ENCODE measurements at regions of chr6 and their contacts with region 1.

Region 1: DNA sequence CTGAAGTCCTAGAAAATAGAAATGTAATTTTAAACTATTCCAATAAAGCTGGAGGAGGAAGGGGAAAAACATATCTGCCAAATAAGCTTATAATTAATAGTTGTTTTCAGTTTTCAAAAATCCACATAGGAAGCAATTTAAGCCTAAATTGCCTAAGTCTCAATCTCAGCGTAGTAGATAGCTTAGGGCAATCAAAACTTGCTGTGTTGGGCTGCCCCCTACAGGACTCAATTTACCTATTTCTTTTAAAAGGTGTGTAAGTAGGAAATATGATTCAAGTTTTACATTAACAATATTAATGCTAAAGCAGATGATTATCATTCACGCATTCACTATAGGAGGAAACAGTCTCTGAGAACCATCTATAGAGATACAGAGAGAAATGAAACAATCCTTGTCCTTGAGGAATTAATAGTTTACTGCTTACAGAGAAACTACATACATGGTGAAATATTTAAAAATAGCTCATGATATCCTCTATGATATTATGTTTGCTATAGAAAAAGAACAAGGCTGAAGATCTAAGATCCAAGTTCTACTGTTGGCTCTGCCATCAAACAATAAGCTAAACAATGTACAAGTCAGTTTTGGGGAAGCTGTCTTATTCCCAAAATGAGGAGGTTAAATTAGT is 102.1 kb downstream of the ATG5 start:
- DNase-seq: peak; percentile 75
- H3K4me3 Mint-ChIP-seq: no peak overlapping the region
- H3K27ac Mint-ChIP-seq: no peak overlapping the region
- H3K4me1 Mint-ChIP-seq: peaks cover 37% of the 10 kb centered on the region
- H3K27me3 Mint-ChIP-seq: no peaks in the 10 kb centered on the region

Region 2: DNA sequence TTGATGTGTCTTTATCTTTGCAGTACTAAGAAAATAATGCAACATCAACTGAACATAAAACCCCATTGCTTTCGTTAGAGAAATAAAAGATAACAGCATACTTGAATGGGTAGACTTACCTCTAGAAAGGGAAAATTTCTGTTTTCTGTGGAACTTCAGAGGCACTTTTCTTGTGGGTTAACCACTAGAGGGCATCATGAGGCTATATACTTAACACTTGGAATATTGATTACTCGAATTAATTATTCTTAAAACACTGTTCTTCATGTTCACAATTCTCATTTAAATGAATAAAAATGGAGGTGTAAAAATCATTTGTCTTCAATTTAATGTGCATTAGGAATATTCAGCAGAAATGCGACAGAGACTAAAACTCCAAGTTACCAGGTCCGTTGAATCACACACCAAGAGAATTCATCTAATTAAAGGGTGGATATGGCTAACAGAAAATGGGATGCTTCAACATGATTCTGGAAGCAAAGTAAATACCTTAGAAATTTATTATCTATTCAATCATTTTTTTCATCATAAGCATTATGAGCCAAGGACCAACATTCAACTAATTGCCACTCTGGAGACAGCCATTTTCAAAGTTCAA is 489.8 kb before region 1 on chr6:
- CTCF ChIA-PET with region 1: interaction called, 10 read pairs
- POLR2A ChIA-PET with region 1: no interaction called
- intact Hi-C with region 1: loop called (anchors 1 kb)
- DNase-seq: no peak
- H3K4me3 Mint-ChIP-seq: no peak overlapping the region
- H3K27ac Mint-ChIP-seq: no peak overlapping the region
- H3K4me1 Mint-ChIP-seq: no peaks in the 10 kb centered on the region
- H3K27me3 Mint-ChIP-seq: no peaks in the 10 kb centered on the region

Region 3: GRCh38 chr6:105992315-105992961 is 231.0 kb before region 1 on chr6:
- CTCF ChIA-PET with region 1: interaction called, 8 read pairs
- POLR2A ChIA-PET with region 1: interaction called, 4 read pairs
- intact Hi-C with region 1: loop called (anchors 5 kb)
- DNase-seq: peak; percentile 92
- H3K4me3 Mint-ChIP-seq: peak overlapping the region; percentile 88
- H3K27ac Mint-ChIP-seq: peak overlapping the region; percentile 81
- H3K4me1 Mint-ChIP-seq: peaks cover 32% of the 10 kb centered on the region
- H3K27me3 Mint-ChIP-seq: peaks cover 39% of the 10 kb centered on the region

Region 4: GRCh38 chr6:106114492-106115265 is 108.7 kb before region 1 on chr6:
- CTCF ChIA-PET with region 1: interaction called, 19 read pairs
- POLR2A ChIA-PET with region 1: interaction called, 3 read pairs
- intact Hi-C with region 1: no loop called
- DNase-seq: peak; percentile 92
- H3K4me3 Mint-ChIP-seq: peak overlapping the region; percentile 25
- H3K27ac Mint-ChIP-seq: peak overlapping the region; percentile 75
- H3K4me1 Mint-ChIP-seq: peaks cover 92% of the 10 kb centered on the region
- H3K27me3 Mint-ChIP-seq: peaks cover 8% of the 10 kb centered on the region

Region 5: DNA sequence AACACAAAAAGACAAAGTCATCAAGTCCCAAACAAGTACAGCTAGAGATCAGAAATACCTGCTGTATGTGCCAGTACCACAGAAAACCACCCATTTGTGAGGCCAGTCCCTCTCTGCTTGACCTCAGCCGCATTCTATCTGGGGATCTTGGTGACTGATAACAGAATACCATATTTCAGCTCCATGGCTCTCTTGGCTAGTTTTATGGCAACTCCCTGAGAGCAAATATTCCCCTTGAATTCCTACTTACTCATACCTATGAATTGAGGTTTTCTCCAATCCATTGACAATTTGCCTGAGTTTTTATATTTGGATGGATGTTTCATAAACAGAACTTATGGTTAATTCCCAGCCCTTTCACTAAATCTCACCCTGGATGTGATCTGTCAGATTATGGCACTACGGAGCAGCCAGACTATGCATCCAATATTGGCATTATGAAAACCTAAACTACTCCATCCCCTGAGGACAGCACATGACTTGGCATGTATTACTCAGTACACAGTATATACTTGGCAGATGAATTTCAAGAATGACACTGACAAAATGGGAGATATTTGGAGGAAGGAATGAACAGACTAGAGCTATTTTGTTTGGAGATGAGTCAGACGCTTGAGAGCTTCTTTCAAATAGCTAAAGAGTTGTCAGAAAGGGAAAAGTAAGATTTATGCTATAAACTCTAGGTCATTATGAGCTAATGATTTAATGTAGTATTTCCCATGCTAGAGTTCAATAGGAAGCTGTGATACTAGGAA is 41.6 kb before region 1 on chr6:
- CTCF ChIA-PET with region 1: interaction called, 16 read pairs
- POLR2A ChIA-PET with region 1: no interaction called
- intact Hi-C with region 1: no loop called
- DNase-seq: no peak
- H3K4me3 Mint-ChIP-seq: no peak overlapping the region
- H3K27ac Mint-ChIP-seq: peak overlapping the region; percentile 46
- H3K4me1 Mint-ChIP-seq: peaks cover 60% of the 10 kb centered on the region
- H3K27me3 Mint-ChIP-seq: no peaks in the 10 kb centered on the region

Measured in activated CD4-positive, alpha-beta memory T cell treated with anti-CD3 and anti-CD28 coated beads for 36 hours (primary cell).